Activated B cell treated with CpG ODN at 0.5 μM for 24 hours (primary cell): ENCODE measurements at regions of chr4 and their contacts with region 1.

Region 1: GRCh38 chr4:25986807-25987206 is 72.8 kb downstream of the SMIM20 start:
- DNase-seq: no peak
- ATAC-seq: no peak
- H3K4me3 Mint-ChIP-seq: no peak overlapping the region
- H3K27ac Mint-ChIP-seq: no peak overlapping the region
- H3K4me1 Mint-ChIP-seq: peaks cover 16% of the 10 kb centered on the region
- H3K27me3 Mint-ChIP-seq: peaks cover 3% of the 10 kb centered on the region
- CTCF ChIP-seq: no peak

Region 2: DNA sequence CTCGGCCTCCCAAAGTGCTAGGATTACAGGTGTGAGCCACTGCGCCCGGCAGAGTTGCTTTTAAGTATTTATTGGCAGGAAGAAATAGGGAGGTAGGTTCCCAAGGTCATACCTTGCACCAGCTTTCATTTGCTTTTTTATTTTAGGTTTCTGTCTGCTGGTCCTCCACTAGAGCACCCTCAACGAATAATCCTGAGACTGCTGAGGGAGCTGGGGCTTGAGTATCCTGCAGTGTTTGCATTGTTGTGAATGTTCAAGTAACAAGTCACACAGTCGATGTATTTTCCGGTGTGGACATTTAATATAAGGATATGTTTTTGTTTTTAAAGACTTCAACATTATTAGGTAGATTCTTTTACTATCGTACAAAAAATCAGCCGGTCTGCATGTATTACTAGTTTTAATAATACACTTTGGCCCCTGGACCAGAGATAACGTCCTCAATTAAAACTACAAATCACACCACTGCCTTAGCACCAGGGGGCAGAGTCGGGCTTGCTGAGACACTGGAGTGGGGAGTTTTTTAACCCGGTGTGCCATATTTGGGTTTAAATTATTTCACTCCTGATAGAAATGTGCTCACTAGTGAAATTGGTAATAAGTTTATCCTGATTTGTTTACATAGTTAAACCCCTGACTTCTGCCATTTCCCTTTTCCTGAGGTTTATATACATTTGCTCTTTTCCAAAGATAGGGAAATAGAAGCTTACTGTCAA is 61.2 kb before region 1 on chr4:
- CTCF ChIA-PET with region 1: interaction called, 7 read pairs
- POLR2A ChIA-PET with region 1: interaction called, 4 read pairs
- intact Hi-C with region 1: loop called (anchors 5 kb)
- DNase-seq: no peak
- ATAC-seq: peak; percentile 57
- H3K4me3 Mint-ChIP-seq: no peak overlapping the region
- H3K27ac Mint-ChIP-seq: no peak overlapping the region
- H3K4me1 Mint-ChIP-seq: no peaks in the 10 kb centered on the region
- H3K27me3 Mint-ChIP-seq: no peaks in the 10 kb centered on the region
- CTCF ChIP-seq: no peak

Region 3: DNA sequence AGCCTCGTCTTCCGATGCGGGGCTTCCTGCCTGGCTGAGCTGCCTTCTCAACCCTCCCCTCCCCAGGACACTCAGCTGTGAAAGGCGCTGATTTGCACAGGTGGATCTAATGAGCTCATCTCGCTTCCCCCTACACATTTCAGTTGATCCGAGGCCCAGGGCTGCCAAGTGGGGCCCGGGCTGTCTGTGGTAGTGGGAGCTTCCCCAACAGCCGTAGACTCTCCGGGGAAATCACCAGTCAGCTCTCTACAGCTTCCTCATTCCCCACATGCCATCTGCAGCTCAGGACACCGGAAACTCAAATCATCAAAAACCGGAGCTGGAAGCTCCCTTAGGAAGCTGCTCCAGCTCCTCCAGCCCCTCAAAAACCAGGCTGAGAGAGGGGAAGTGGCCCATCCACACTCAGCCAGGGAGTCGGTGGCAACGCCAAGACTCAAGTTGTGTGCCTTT is 16.6 kb before region 1 on chr4:
- CTCF ChIA-PET with region 1: interaction called, 19 read pairs
- POLR2A ChIA-PET with region 1: no interaction called
- intact Hi-C with region 1: no loop called
- DNase-seq: peak; percentile 23
- ATAC-seq: peak; percentile 91
- H3K4me3 Mint-ChIP-seq: peak overlapping the region; percentile 54
- H3K27ac Mint-ChIP-seq: peak overlapping the region; percentile 62
- H3K4me1 Mint-ChIP-seq: peaks cover 32% of the 10 kb centered on the region
- H3K27me3 Mint-ChIP-seq: no peaks in the 10 kb centered on the region
- CTCF ChIP-seq: no peak

Region 4: DNA sequence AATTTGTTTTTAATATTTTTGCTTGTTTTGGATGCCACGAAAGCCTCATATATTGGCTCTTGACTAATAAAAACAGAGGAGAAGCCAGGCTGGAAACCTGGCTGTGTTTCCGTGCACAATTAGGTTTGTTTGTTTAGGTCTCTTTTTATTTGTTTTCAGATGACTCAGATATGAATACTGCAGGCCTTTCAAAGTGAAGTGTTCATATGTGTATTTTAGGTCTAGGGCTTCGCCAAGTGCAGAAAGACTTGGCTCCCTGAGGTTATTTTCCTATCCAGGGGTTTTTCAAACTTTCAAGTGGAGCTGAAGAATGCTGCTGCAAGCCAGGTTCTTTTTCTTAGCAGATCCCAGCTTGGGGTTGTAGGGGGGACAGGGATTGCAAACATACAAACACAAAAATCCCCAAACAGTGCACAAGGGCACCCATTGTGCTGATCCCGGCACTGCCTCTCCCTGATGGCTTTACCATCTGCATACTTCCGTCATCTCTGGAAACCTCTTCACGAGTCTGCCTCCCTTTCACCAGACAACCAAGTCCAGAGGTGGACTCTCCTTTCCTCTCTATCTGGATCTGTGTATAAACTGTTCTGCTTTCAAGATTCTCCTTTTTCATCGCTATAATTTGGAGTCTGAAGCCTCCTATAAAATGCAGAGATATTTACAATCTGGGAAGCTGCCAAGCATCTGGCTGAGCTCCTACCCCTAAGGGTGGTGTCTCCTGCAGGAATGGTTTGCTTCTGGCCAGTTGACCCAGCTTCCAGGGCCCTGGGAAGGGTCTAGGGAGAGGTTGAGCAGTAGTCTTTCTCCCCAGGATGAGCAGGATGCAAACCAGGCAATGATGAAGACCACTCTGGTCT is 35.8 kb after region 1 on chr4:
- CTCF ChIA-PET with region 1: no interaction called
- POLR2A ChIA-PET with region 1: no interaction called
- intact Hi-C with region 1: no loop called
- DNase-seq: no peak
- ATAC-seq: no peak
- H3K4me3 Mint-ChIP-seq: no peak overlapping the region
- H3K27ac Mint-ChIP-seq: no peak overlapping the region
- H3K4me1 Mint-ChIP-seq: no peaks in the 10 kb centered on the region
- H3K27me3 Mint-ChIP-seq: peaks cover 8% of the 10 kb centered on the region
- CTCF ChIP-seq: no peak

Region 5: DNA sequence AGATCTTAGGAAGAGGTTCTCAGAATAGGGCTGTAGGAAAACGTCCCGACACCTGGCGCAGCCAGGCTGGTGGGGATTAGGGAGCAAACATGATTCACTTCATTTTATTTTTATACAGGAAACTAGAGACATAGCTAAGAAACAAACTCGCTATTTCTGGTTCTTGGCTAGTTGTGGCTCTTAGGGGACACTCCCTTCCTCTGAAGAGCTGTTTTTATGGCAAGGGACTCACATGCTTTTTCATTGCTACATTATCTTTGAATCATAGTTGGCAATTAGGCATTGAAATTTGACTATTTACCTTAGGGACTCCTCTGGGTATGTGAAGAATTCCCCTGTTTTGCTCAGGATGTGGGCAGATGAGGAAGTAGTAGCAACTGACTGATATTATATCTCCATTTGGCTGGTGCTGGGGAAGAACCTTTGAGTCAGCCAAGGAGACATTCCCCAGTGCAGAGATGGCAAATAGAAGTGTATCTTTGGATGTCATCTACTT is 101.7 kb after region 1 on chr4:
- CTCF ChIA-PET with region 1: no interaction called
- POLR2A ChIA-PET with region 1: no interaction called
- intact Hi-C with region 1: loop called (anchors 5 kb)
- DNase-seq: no peak
- ATAC-seq: peak; percentile 93
- H3K4me3 Mint-ChIP-seq: peak overlapping the region; percentile 48
- H3K27ac Mint-ChIP-seq: peak overlapping the region; percentile 79
- H3K4me1 Mint-ChIP-seq: peaks cover 24% of the 10 kb centered on the region
- H3K27me3 Mint-ChIP-seq: peaks cover 2% of the 10 kb centered on the region
- CTCF ChIP-seq: no peak